ENCODE measurements at regions of chr6 and their contacts with region 1.

Region 1: GRCh38 chr6:10954590-10955010 is 67.7 kb downstream of the SYCP2L start:
- DNase-seq: peak; percentile 84
- H3K4me3 Mint-ChIP-seq: no peak overlapping the region
- H3K27ac Mint-ChIP-seq: no peak overlapping the region
- H3K4me1 Mint-ChIP-seq: no peaks in the 10 kb centered on the region
- H3K27me3 Mint-ChIP-seq: peaks cover 16% of the 10 kb centered on the region

Region 2: DNA sequence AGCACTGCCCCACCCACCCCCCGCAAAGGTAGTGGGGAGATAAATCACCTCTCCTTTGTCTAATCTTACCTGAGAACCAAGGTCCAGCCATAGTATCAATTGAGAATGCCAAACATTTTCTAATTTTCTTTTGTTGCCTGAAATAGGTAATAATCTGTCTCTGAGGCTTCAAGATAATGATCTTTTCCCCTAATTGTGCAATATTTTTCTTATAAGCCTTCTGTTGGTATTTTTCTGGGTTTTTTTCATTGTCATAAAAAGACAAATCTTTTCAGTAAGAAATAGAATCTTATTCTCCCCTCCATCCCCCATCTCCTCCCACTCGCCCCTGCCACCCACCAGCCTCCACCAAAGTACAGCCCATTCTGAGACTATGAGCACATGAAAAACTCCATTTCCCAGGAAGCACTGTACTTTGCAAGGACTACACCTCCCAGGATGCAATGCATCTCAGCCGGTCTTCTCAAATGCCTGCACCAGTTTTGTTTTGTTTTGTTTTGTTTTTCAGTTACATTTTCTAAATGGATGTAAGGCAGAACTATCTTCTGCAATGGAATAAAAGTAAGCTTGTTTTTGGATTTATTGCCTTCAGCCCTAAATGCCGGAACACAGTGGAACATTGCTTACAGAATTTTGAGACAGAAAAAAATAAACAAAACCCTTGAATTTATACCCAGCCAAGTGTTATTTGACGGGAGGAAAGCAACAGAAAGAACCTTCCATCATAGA is 807.7 kb before region 1 on chr6:
- CTCF ChIA-PET with region 1: no interaction called
- intact Hi-C with region 1: no loop called
- DNase-seq: peak; percentile 8
- H3K4me3 Mint-ChIP-seq: peak overlapping the region; percentile 48
- H3K27ac Mint-ChIP-seq: no peak overlapping the region
- H3K4me1 Mint-ChIP-seq: peaks cover 4% of the 10 kb centered on the region
- H3K27me3 Mint-ChIP-seq: peaks cover 7% of the 10 kb centered on the region

Region 3: GRCh38 chr6:11043961-11044711 is 89.5 kb after region 1 on chr6 and contains the start of gene ELOVL2:
- CTCF ChIA-PET with region 1: interaction called, 4 read pairs
- intact Hi-C with region 1: loop called (anchors 1 kb)
- DNase-seq: peak; percentile 12
- H3K4me3 Mint-ChIP-seq: peak within 1 kb of the TSS; percentile 64
- H3K27ac Mint-ChIP-seq: no peak within 1 kb of the TSS
- H3K4me1 Mint-ChIP-seq: peaks cover 12% of the 10 kb centered on the region
- H3K27me3 Mint-ChIP-seq: peaks cover 52% of the 10 kb centered on the region
- total RNA-seq, gene ELOVL2: not detected

Region 4: DNA sequence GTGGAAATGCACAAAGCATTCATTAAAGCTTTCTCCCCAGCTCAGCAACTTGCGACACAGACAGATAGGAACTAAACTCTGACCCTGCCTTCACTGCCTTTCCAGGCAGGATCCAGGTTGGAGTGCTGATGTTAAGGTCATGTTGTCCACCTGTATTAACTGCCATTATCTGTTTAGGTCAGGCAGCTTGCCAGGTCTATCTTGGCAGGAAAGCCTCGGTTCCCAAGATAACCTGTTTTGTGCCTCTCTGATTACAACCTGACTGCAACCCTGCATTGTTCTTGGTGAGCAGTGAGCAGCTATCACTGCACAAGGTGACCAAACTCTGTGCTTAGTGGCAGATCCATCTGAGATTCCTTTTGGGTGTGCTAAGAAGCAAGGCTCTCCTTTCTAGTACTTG is 112.7 kb after region 1 on chr6:
- CTCF ChIA-PET with region 1: interaction called, 37 read pairs
- intact Hi-C with region 1: loop called (anchors 1 kb)
- DNase-seq: no peak
- H3K4me3 Mint-ChIP-seq: no peak overlapping the region
- H3K27ac Mint-ChIP-seq: no peak overlapping the region
- H3K4me1 Mint-ChIP-seq: no peaks in the 10 kb centered on the region
- H3K27me3 Mint-ChIP-seq: peaks cover 3% of the 10 kb centered on the region

Region 5: DNA sequence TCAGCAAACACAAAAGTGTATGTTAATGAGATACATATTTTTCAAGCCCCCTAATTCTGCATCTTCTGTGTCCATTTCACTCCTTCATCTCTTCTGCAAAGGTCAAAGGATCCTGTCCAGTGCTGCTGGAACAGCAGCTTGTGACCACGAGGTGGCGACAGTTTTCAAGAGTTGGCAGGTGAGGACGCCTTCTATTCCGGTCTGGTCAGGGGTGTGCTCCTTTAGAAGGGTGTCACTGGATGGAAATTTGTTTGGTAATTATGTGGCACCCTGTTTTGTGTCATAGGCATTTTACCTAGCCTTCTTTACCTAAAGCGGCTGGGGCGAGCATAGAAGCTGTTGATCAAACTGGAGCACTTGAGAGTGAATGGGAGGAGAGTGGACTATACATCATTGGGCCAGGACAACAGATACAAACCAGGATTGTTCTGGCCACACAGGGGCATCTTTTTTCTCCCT is 189.8 kb after region 1 on chr6:
- CTCF ChIA-PET with region 1: no interaction called
- intact Hi-C with region 1: loop called (anchors 5 kb)
- DNase-seq: peak; percentile 89
- H3K4me3 Mint-ChIP-seq: no peak overlapping the region
- H3K27ac Mint-ChIP-seq: no peak overlapping the region
- H3K4me1 Mint-ChIP-seq: peaks cover 7% of the 10 kb centered on the region
- H3K27me3 Mint-ChIP-seq: no peaks in the 10 kb centered on the region

Region 6: DNA sequence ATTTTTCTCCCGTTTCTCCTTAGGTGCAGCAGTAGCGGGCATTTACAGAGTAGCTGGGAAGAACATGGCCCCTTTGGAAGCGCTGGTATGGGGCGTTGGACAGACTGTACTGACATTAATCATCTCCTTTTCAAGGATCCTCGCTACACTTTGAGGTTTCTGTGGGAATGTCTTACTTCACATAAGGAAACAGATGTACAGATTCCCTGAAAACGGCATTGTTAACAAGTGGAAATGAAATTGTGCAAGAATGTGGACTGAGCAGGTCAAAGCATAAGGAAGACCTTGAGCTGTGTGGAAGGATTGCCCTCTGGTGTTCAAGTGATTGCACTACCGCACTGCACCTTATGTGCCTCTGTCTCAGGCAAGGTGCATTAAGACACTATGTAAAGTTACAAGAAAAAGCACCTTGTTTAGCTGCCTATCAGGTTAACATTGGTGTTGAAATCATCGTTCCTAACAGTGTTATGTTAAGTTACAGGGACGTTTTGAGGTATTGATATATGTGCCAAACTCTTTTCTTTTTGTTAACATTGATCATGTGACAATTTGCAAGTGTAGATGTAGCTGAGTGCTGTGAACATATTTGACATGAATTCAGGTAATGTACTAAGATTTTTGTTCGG is 620.9 kb after region 1 on chr6:
- CTCF ChIA-PET with region 1: interaction called, 6 read pairs
- intact Hi-C with region 1: loop called (anchors 1 kb)
- DNase-seq: peak; percentile 75
- H3K4me3 Mint-ChIP-seq: no peak overlapping the region
- H3K27ac Mint-ChIP-seq: no peak overlapping the region
- H3K4me1 Mint-ChIP-seq: no peaks in the 10 kb centered on the region
- H3K27me3 Mint-ChIP-seq: no peaks in the 10 kb centered on the region